WTC11 (cell line): ENCODE measurements at regions of chr2 and their contacts with region 1.

Region 1: GRCh38 chr2:173545364-173545763 is 190.7 kb downstream of the CDCA7 start:
- DNase-seq: no peak
- ATAC-seq: no peak
- H3K4me3 Mint-ChIP-seq: no peak overlapping the region
- H3K27ac Mint-ChIP-seq: no peak overlapping the region
- H3K4me1 Mint-ChIP-seq: peaks cover 10% of the 10 kb centered on the region
- H3K27me3 Mint-ChIP-seq: no peaks in the 10 kb centered on the region
- CTCF ChIP-seq: no peak

Region 2: DNA sequence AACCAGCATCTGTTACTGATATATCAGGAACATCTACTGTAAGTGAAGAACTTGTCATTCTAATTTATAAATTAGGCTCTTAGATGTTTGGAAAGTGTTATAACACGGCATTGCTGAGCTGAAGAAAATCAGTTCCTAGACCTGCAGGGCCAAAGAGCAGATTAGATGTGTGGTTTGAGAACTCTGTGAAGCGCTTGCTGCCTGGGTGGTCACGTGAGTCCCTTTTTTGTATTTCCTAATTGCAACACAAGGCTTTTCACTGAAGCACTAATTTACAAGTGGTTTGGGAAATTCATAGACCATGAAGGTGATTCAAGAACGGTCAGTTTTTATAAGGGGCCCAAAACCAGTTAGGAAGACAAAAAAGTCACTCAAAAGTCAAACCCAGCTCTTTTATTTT is 526.7 kb after region 1 on chr2:
- CTCF ChIA-PET with region 1: no interaction called
- POLR2A ChIA-PET with region 1: interaction called, 10 read pairs
- DNase-seq: no peak
- ATAC-seq: peak; percentile 30
- H3K4me3 Mint-ChIP-seq: no peak overlapping the region
- H3K27ac Mint-ChIP-seq: peak overlapping the region; percentile 29; the same call in 1 of the 2 replicates
- H3K4me1 Mint-ChIP-seq: peaks cover 27% of the 10 kb centered on the region
- H3K27me3 Mint-ChIP-seq: no peaks in the 10 kb centered on the region
- CTCF ChIP-seq: no peak